ENCODE measurements at regions of chr5 and their contacts with region 1.

Region 1: GRCh38 chr5:174409070-174409469 is 315.3 kb upstream of the MSX2 start:
- DNase-seq: peak; percentile 20
- H3K4me3 Mint-ChIP-seq: no peak overlapping the region
- H3K27ac Mint-ChIP-seq: no peak overlapping the region
- H3K4me1 Mint-ChIP-seq: peaks cover 20% of the 10 kb centered on the region
- H3K27me3 Mint-ChIP-seq: peaks cover 29% of the 10 kb centered on the region
- CTCF ChIP-seq: no peak

Region 2: GRCh38 chr5:174327317-174328236 is 81.5 kb before region 1 on chr5:
- CTCF ChIA-PET with region 1: interaction called, 8 read pairs
- POLR2A ChIA-PET with region 1: interaction called, 4 read pairs
- intact Hi-C with region 1: loop called (anchors 1 kb)
- DNase-seq: peak; percentile 88
- H3K4me3 Mint-ChIP-seq: no peak overlapping the region
- H3K27ac Mint-ChIP-seq: peak overlapping the region; percentile 96
- H3K4me1 Mint-ChIP-seq: peaks cover 25% of the 10 kb centered on the region
- H3K27me3 Mint-ChIP-seq: peaks cover 25% of the 10 kb centered on the region
- CTCF ChIP-seq: peak; percentile 98

Region 3: DNA sequence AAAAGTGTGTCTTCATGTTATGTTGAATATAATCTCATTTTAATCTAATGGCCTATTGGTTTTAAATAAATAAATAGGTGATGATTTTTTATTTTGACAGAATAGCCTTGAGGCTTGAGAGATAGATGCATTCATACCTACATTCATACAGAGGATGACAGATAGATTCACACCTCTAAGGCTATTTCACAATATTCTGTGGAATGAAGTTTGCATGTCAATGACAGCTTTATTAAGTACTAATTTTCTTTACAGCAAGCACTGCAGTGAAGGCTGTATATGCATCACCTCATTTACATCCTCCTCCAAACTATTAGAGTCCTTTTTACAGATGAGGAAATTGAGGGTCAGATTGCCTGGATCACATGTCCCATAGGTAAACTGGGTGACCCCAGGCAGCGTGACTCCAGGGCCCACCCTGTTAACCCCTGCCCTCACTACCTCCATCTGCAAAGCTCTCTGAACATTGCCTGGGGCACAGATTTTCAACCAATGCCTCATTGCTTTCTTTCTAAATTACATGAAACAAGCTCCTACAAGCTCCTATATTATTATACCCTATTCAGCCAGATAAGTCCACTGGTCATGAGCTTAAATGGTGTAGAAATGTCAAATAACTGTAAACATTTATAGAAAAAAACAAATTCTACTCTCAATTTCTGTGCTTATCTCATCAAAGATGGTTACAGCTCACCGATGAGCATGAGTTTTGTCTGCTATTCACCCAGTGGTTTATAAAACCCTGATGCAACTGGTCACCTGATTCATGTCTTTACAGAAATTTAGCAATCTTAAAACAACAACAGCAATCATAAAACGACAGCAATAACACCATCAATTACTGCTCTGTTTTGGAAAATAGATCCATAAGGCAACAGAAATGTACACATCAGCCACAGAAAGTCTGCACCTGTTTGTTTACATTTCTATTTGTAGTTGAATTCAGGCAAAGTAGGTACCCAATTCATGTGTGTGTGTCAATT is 25.6 kb before region 1 on chr5:
- CTCF ChIA-PET with region 1: interaction called, 4 read pairs
- POLR2A ChIA-PET with region 1: interaction called, 14 read pairs
- intact Hi-C with region 1: no loop called
- DNase-seq: peak; percentile 16
- H3K4me3 Mint-ChIP-seq: no peak overlapping the region
- H3K27ac Mint-ChIP-seq: peak overlapping the region; percentile 14
- H3K4me1 Mint-ChIP-seq: peaks cover 5% of the 10 kb centered on the region
- H3K27me3 Mint-ChIP-seq: peaks cover 10% of the 10 kb centered on the region
- CTCF ChIP-seq: no peak

Region 4: GRCh38 chr5:174424219-174425053 is 15.4 kb after region 1 on chr5:
- CTCF ChIA-PET with region 1: interaction called, 23 read pairs
- POLR2A ChIA-PET with region 1: interaction called, 3 read pairs
- intact Hi-C with region 1: no loop called
- DNase-seq: peak; percentile 21
- H3K4me3 Mint-ChIP-seq: no peak overlapping the region
- H3K27ac Mint-ChIP-seq: peak overlapping the region; percentile 50
- H3K4me1 Mint-ChIP-seq: peaks cover 10% of the 10 kb centered on the region
- H3K27me3 Mint-ChIP-seq: no peaks in the 10 kb centered on the region
- CTCF ChIP-seq: no peak